Dorsolateral prefrontal cortex (tissue), 120 donors: ENCODE measurements at regions of chr7 and their contacts with region 1.

Region 1: GRCh38 chr7:119175911-119176627 is 951.6 kb downstream of the ANKRD7 start:
- DNase-seq: peak in 5 of 10 donors; percentile 18 to 76 (median 51)
- H3K4me3 ChIP-seq: no peak overlapping the region
- H3K27ac ChIP-seq: no peak overlapping the region
- H3K27me3 ChIP-seq: no peaks in the 10 kb centered on the region
- CTCF ChIP-seq: peak; percentile 57 to 87 (median 74)

Region 2: GRCh38 chr7:118250860-118251494 is 925.1 kb before region 1 on chr7:
- intact Hi-C with region 1: loop called in 1 of 2 experiments (anchors 10 kb)
- DNase-seq: no peak
- H3K4me3 ChIP-seq: no peak overlapping the region
- H3K27ac ChIP-seq: no peak overlapping the region
- H3K27me3 ChIP-seq: no peaks in the 10 kb centered on the region
- CTCF ChIP-seq: peak in 48 of 56 donors; percentile 4 to 54 (median 35)

Region 3: DNA sequence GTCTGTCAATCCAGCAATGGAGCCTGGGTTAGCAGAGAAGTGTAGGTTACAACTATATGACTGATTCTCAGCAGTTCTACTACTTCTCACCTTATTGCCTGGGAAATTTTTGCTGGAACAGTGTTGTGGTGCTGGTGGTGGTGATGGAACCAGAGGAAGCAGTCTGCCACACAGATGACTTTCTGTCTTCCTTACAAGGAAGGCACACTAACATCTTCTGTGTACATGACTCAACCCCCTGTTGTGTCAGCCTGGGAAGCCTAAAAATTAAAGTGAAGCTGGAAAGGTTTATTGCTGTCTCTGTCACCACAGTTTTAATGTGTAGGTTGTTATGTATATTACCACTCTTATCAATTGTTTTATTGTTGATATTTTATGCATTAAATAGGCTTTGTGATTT is 911.2 kb before region 1 on chr7:
- intact Hi-C with region 1: loop called in 1 of 2 experiments (anchors 10 kb)
- DNase-seq: no peak
- H3K4me3 ChIP-seq: no peak overlapping the region
- H3K27ac ChIP-seq: no peak overlapping the region
- H3K27me3 ChIP-seq: no peaks in the 10 kb centered on the region
- CTCF ChIP-seq: no peak

Region 4: GRCh38 chr7:118352854-118353453 is 823.1 kb before region 1 on chr7:
- intact Hi-C with region 1: loop called in 1 of 2 experiments (anchors 10 kb)
- DNase-seq: no peak
- H3K4me3 ChIP-seq: no peak overlapping the region
- H3K27ac ChIP-seq: no peak overlapping the region
- H3K27me3 ChIP-seq: no peaks in the 10 kb centered on the region
- CTCF ChIP-seq: peak in 55 of 56 donors; percentile 22 to 73 (median 44)